ENCODE measurements at regions of chr19 and their contacts with region 1.

Region 1: DNA sequence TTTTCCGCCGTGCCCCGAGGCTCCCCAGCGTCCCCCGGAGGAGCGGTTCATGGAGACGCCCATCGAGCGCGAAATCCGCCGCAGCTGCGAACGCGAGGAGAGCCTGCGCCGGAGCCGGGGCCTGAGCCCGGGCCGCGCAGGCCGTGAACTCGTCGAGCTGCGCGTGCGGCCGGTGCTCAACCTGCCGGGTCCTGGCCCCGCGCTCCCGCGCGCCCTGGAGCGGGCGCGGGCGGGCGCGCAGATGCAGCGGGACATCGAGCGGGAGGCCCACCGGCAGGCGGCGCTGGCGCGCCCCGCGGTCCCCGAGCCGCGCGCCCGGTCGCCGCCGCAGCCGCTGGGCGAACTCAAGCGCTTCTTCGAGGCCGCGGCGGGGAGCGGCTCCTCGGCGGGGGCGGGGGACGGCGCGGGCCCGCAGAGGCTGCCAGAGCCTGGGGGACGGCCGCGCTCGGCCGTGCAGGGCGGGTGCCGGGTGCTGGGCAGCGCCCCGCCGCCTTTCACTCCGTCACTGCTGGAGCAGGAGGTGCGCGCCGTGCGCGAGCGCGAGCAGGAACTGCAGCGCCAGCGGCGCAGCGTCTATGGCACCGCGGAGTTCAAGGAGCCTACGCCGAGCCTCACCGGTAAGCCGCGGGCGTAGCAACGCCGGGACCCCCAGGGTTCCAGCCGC is 807 bp downstream of the MISP3 start:
- DNase-seq: peak; percentile 77 to 89 (median 82)
- ATAC-seq: peak; percentile 13 to 62 (median 53)
- H3K4me3 ChIP-seq: peak overlapping the region; percentile 56 to 89 (median 74)
- H3K27ac ChIP-seq: peak overlapping the region; percentile 69 to 98 (median 91)
- H3K4me1 ChIP-seq: peaks cover 0 to 47% (median 25%) of the 10 kb centered on the region in 12 donors
- H3K27me3 ChIP-seq: no peaks in the 10 kb centered on the region
- CTCF ChIP-seq: peak in 10 of 12 donors; percentile 19 to 89 (median 47)
- POLR2A ChIP-seq: peak in 1 of 2 donors; percentile 38

Region 2: GRCh38 chr19:13784731-13785452 is 288.5 kb before region 1 on chr19:
- intact Hi-C with region 1: loop called in 1 of 10 experiments (anchors 10 kb)
- DNase-seq: peak; percentile 71 to 89 (median 77)
- ATAC-seq: peak; percentile 35 to 65 (median 52)
- H3K4me3 ChIP-seq: peak overlapping the region in 2 of 12 donors; percentile 0 to 2
- H3K27ac ChIP-seq: no peak overlapping the region
- H3K4me1 ChIP-seq: peaks cover 0 to 63% (median 23%) of the 10 kb centered on the region in 12 donors
- H3K27me3 ChIP-seq: no peaks in the 10 kb centered on the region
- CTCF ChIP-seq: peak; percentile 47 to 78 (median 65)
- POLR2A ChIP-seq: no peak

Region 3: DNA sequence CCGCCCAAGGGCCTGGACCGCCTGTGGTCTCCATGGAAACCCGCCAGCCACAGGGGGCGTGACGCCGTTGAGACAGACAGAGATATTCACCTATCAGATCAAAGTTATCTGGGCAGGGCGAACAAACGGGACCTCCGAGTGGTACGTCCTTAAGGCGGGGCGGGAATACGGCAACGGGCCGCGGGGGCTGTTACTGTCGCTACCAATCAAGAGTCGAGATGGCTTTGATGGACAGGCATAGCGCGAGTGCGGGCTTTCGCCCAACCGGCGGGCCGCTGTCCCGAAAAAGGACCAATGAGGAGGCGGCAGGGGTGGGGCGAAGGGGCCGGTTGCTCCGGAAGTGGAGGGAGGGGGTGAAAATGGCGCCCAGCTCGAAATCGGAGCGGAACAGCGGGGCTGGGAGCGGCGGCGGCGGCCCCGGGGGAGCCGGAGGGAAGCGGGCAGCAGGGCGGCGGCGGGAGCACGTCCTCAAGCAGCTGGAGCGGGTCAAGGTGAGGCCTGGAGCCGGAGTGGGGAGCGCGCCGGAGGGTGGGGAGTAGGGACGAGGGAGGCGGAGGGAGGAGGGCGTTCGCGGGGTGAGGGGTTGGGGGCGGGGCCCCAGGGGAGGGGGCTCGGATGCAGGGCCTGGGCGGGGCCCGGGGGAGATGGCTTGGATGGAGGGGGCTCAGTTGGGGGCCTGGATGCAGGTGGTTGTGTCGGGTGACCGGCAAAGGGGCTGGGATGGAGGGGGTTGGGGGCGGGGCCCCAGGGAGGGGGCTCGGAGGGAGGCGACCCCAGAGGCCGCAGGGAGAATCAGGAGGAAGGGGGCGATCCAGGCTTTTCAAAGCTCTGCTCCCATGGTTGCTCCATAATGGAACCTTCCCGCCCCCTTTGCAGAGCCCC is 121.0 kb before region 1 on chr19 and contains the start of gene DCAF15:
- intact Hi-C with region 1: loop called in 1 of 10 experiments (anchors 10 kb)
- DNase-seq: peak; percentile 99 to 100 (median 100)
- ATAC-seq: peak; percentile 99
- H3K4me3 ChIP-seq: peak within 1 kb of the TSS; percentile 55 to 92 (median 76)
- H3K27ac ChIP-seq: peak within 1 kb of the TSS; percentile 65 to 90 (median 81)
- H3K4me1 ChIP-seq: peaks cover 5 to 31% (median 15%) of the 10 kb centered on the region in 12 donors
- H3K27me3 ChIP-seq: no peaks in the 10 kb centered on the region
- CTCF ChIP-seq: no peak
- POLR2A ChIP-seq: peak in 1 of 2 donors; percentile 54
- total RNA-seq, gene DCAF15: 8.4 to 21.4 (median 17.6) TPM

Region 4: GRCh38 chr19:14031719-14032480 is 41.5 kb before region 1 on chr19 and contains the start of gene IL27RA:
- intact Hi-C with region 1: no loop called
- DNase-seq: peak; percentile 69 to 85 (median 75)
- ATAC-seq: peak; percentile 76 to 88 (median 83)
- H3K4me3 ChIP-seq: peak within 1 kb of the TSS; percentile 60 to 85 (median 70)
- H3K27ac ChIP-seq: peak within 1 kb of the TSS; percentile 76 to 97 (median 90)
- H3K4me1 ChIP-seq: peaks cover 0 to 17% (median 8%) of the 10 kb centered on the region in 12 donors
- H3K27me3 ChIP-seq: peaks cover 0 to 7% (median 0%) of the 10 kb centered on the region in 9 donors
- CTCF ChIP-seq: peak; percentile 47 to 73 (median 62)
- POLR2A ChIP-seq: peak in 1 of 2 donors; percentile 51
- total RNA-seq, gene IL27RA: 2.4 to 8.2 (median 4.2) TPM

Region 5: DNA sequence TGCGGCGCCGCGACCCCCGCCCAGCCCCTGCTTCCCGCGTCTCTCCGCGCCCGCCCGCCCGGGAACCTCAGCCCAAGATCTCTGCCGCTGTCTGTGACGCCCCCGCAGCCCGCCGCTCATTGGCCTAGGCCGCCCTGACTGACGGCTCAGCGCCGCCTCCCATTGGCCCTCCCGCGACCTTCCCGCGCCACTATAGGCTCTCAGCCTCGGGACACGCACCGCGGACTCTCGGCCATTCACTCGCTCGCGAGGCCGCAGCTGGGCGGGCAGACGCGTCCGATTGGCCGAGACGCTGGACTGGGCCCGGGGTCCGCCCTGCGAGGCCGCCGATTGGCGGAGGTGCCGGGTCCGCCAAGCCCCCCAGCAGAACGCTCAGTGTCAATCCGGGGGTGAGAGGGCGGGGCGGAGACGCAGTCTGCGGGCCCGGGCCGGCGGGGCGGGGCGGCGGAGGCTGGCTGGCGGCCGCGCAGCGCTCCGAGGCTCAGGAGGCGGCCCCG is 44.3 kb after region 1 on chr19 and contains the start of gene PRKACA:
- intact Hi-C with region 1: loop called in 2 of 10 experiments (anchors 5 kb)
- DNase-seq: peak; percentile 99 to 100 (median 100)
- ATAC-seq: peak; percentile 87 to 94 (median 92)
- H3K4me3 ChIP-seq: peak within 1 kb of the TSS; percentile 52 to 98 (median 92)
- H3K27ac ChIP-seq: peak within 1 kb of the TSS; percentile 93 to 100 (median 99)
- H3K4me1 ChIP-seq: peaks cover 27 to 67% (median 58%) of the 10 kb centered on the region in 12 donors
- H3K27me3 ChIP-seq: no peaks in the 10 kb centered on the region
- CTCF ChIP-seq: no peak
- POLR2A ChIP-seq: peak in 1 of 2 donors; percentile 72
- total RNA-seq, gene PRKACA: 216 to 554 (median 459) TPM

Region 6: GRCh38 chr19:14127929-14128509 is 54.6 kb after region 1 on chr19:
- intact Hi-C with region 1: no loop called
- DNase-seq: peak in 4 of 5 donors; percentile 43 to 67 (median 50)
- ATAC-seq: peak; percentile 84 to 93 (median 92)
- H3K4me3 ChIP-seq: peak overlapping the region in 1 of 12 donors; percentile 12
- H3K27ac ChIP-seq: peak overlapping the region in 11 of 12 donors; percentile 57 to 88 (median 72)
- H3K4me1 ChIP-seq: peaks cover 0 to 42% (median 14%) of the 10 kb centered on the region in 12 donors
- H3K27me3 ChIP-seq: no peaks in the 10 kb centered on the region
- CTCF ChIP-seq: no peak
- POLR2A ChIP-seq: no peak

Measured in heart left ventricle (tissue), 16 donors.